T-cell (primary cell): ENCODE measurements at regions of chr6 and their contacts with region 1.

Region 1: DNA sequence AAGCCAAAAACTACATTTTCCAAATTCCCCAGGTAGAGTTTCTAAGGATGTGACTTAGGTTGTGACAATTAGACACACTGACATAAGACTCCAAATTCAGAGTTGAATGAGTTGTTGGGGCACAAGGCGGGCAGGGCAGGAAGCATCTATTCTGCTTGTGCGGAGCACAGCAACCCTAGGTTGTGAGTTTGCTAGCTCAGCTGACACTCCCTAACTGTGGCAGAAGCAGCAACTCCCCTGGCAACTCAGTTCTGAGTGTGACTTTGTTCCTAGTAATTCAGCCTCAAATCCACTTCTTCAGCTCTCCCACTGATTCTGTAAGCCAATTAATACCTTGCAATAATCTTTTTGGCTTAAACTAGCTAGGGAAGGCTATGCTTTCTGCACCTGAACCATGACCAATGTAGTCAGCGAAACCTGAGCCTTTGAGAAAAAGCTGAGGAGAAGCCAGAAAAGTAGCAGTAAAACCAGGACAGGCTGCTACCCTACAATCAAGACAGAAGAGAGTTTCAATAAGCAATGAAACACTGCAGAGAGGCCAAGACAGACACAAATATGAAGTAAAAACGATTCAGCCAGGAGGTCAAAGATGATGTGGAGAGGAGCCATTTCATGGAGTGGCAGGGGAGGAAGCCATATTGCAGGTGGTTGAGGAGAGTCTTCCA is 30.0 kb upstream of the PAQR8 start:
- DNase-seq: peak in 2 of 35 experiments; percentile 16 to 29
- ATAC-seq: peak in 3 of 4 experiments; percentile 40 to 52 (median 52)
- H3K4me3 ChIP-seq: no peak overlapping the region
- H3K4me3 Mint-ChIP-seq: peak overlapping the region in 1 of 3 donors; percentile 66
- H3K27ac ChIP-seq: no peak overlapping the region
- H3K27ac Mint-ChIP-seq: peak overlapping the region; percentile 89 to 96
- H3K4me1 ChIP-seq: peaks cover 39 to 46% of the 10 kb centered on the region in 2 experiments
- H3K4me1 Mint-ChIP-seq: peaks cover 55 to 69% (median 56%) of the 10 kb centered on the region in 3 donors
- H3K27me3 ChIP-seq: no peaks in the 10 kb centered on the region
- H3K27me3 Mint-ChIP-seq: no peaks in the 10 kb centered on the region

Region 2: GRCh38 chr6:52531396-52531795 is 199.5 kb after region 1 on chr6:
- CTCF ChIA-PET with region 1: no interaction called
- POLR2A ChIA-PET with region 1: interaction called in 1 of 2 experiments, 19 read pairs
- DNase-seq: no peak
- ATAC-seq: no peak
- H3K4me3 ChIP-seq: no peak overlapping the region
- H3K4me3 Mint-ChIP-seq: no peak overlapping the region
- H3K27ac ChIP-seq: no peak overlapping the region
- H3K27ac Mint-ChIP-seq: no peak overlapping the region
- H3K4me1 ChIP-seq: peaks cover 7 to 18% of the 10 kb centered on the region in 2 experiments
- H3K4me1 Mint-ChIP-seq: peaks cover 18 to 20% (median 20%) of the 10 kb centered on the region in 3 donors
- H3K27me3 ChIP-seq: no peaks in the 10 kb centered on the region
- H3K27me3 Mint-ChIP-seq: no peaks in the 10 kb centered on the region